ENCODE measurements at regions of chr4 and their contacts with region 1.

Region 1: GRCh38 chr4:121656269-121656641 is 40.5 kb downstream of the ANXA5 start:
- DNase-seq: no peak
- H3K4me3 Mint-ChIP-seq: no peak overlapping the region
- H3K27ac Mint-ChIP-seq: no peak overlapping the region
- H3K4me1 Mint-ChIP-seq: no peaks in the 10 kb centered on the region
- H3K27me3 Mint-ChIP-seq: peaks cover 13% of the 10 kb centered on the region

Region 2: DNA sequence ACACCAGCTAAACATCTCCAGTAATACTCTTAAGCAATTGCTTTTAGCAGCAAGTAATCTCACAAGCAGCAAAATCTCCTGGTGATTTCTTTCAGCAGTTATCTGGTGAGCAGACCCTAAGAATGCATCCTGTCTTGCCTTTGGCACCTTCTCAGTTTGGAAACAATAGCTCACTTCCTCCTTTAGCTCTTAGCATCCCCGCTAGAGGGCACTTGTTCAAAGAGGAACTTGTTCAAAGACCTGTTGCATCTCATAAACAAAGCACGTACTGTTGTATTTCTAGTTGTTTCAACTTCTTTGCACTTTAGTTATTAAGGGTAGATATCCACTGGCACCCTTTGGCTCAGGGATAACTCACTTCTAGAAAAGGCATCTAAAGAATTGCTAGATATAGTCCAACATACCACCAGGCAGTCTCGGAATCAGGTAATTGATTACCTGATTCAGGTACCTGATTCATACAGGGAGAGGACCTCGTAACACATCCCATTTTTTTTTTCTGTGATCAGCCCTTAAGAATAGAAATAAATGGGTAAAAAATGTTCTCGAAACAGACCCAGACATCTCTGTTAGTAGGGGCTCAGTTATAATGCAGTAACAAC is 193.5 kb before region 1 on chr4:
- intact Hi-C with region 1: loop called (anchors 1 kb)
- DNase-seq: peak; percentile 31
- H3K4me3 Mint-ChIP-seq: no peak overlapping the region
- H3K27ac Mint-ChIP-seq: no peak overlapping the region
- H3K4me1 Mint-ChIP-seq: peaks cover 4% of the 10 kb centered on the region
- H3K27me3 Mint-ChIP-seq: peaks cover 18% of the 10 kb centered on the region

Region 3: GRCh38 chr4:121484633-121485032 is 171.6 kb before region 1 on chr4:
- intact Hi-C with region 1: loop called (anchors 1 kb)
- DNase-seq: no peak
- H3K4me3 Mint-ChIP-seq: no peak overlapping the region
- H3K27ac Mint-ChIP-seq: no peak overlapping the region
- H3K4me1 Mint-ChIP-seq: no peaks in the 10 kb centered on the region
- H3K27me3 Mint-ChIP-seq: peaks cover 22% of the 10 kb centered on the region